CD14-positive monocyte (primary cell): ENCODE measurements at regions of chr22 and their contacts with region 1.

Region 1: GRCh38 chr22:25540166-25540907 is 24.1 kb upstream of the GRK3 start:
- DNase-seq: peak in 2 of 3 donors; percentile 16 to 21
- H3K4me3 ChIP-seq: no peak overlapping the region
- H3K4me3 Mint-ChIP-seq: no peak overlapping the region
- H3K27ac ChIP-seq: peak overlapping the region in 1 of 2 donors; percentile 3
- H3K27ac Mint-ChIP-seq: peak overlapping the region in 2 of 7 donors; percentile 1 to 9
- H3K4me1 ChIP-seq: peaks cover 27 to 31% of the 10 kb centered on the region in 2 donors
- H3K4me1 Mint-ChIP-seq: peaks cover 29% of the 10 kb centered on the region
- H3K27me3 ChIP-seq: no peaks in the 10 kb centered on the region
- H3K27me3 Mint-ChIP-seq: peaks cover 0 to 1% (median 0%) of the 10 kb centered on the region in 3 donors
- CTCF ChIP-seq: no peak

Region 2: GRCh38 chr22:25650833-25651232 is 110.5 kb after region 1 on chr22:
- intact Hi-C with region 1: loop called in 1 of 2 experiments (anchors 5 kb)
- DNase-seq: peak; percentile 21 to 76 (median 45)
- H3K4me3 ChIP-seq: peak overlapping the region in 1 of 3 experiments; percentile 48
- H3K4me3 Mint-ChIP-seq: no peak overlapping the region
- H3K27ac ChIP-seq: peak overlapping the region in 1 of 2 donors; percentile 76
- H3K27ac Mint-ChIP-seq: peak overlapping the region in 2 of 7 donors; percentile 52 to 69
- H3K4me1 ChIP-seq: peaks cover 13 to 22% of the 10 kb centered on the region in 2 donors
- H3K4me1 Mint-ChIP-seq: peaks cover 20% of the 10 kb centered on the region
- H3K27me3 ChIP-seq: no peaks in the 10 kb centered on the region
- H3K27me3 Mint-ChIP-seq: peaks cover 0 to 2% (median 0%) of the 10 kb centered on the region in 3 donors
- CTCF ChIP-seq: no peak